ENCODE measurements at regions of chr4 and their contacts with region 1.

Region 1: GRCh38 chr4:74320559-74321118 is 12.4 kb downstream of the EPGN start:
- DNase-seq: peak; percentile 79

Region 2: GRCh38 chr4:74189331-74190043 is 131.2 kb before region 1 on chr4:
- in situ Hi-C with region 1: loop called (anchors 25 kb)
- DNase-seq: peak; percentile 79